Head of caudate nucleus (tissue), 42 donors: ENCODE measurements at regions of chr14 and their contacts with region 1.

Region 1: GRCh38 chr14:53539489-53540126 is 386.5 kb upstream of the DDHD1 start:
- DNase-seq: peak; percentile 51 to 92 (median 83)

Region 2: GRCh38 chr14:54175298-54175942 is 635.8 kb after region 1 on chr14:
- intact Hi-C with region 1: loop called (anchors 5 kb)
- DNase-seq: peak in 41 of 42 donors; percentile 10 to 90 (median 71)

Region 3: GRCh38 chr14:54347997-54348611 is 808.5 kb after region 1 on chr14:
- intact Hi-C with region 1: loop called (anchors 5 kb)
- DNase-seq: peak in 10 of 42 donors; percentile 31 to 76 (median 46)